Posterior vena cava (tissue), 2 donors: ENCODE measurements at regions of chr14 and their contacts with region 1.

Region 1: DNA sequence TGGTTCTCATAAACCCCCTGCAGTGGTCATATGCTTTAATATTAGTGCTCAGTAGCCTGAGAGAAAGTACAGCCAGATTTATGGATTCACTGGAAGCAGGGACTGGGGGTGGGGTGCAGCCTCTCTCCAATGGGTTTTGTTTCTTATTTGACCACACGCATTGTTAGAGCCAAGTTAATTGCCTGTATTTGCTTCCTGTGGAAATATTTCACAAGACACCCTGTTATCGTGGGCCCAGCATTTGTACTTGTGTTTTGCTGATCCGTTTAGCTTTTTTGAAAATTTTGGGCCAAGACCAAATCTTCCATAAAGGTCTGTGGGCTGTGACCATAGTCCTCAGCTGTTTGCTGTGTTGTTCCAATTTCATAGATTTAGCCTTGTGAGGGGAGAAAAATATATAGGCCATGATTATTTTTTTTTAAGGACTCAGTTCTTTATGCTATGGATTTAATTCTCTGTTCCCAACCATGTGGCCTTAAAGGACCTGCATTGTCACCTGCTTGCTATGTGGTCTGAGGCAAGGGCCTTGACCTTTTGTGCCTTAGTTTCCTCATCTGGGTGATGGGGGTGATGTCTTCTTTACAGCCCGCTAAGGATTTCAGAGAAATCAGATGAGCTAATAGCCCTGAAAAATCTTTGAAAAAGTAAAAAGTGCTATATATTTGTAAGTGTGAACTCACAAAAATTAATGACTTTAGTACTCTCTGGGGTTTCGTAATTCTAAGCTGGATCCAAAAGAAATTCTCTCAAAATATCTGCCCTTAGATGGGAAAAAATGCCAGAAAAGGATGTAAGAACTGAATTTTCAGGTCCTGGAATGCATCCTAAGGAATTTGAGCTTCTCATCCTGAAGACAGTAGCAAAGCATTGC is 370.2 kb downstream of the DPF3 start:
- DNase-seq: no peak

Region 2: DNA sequence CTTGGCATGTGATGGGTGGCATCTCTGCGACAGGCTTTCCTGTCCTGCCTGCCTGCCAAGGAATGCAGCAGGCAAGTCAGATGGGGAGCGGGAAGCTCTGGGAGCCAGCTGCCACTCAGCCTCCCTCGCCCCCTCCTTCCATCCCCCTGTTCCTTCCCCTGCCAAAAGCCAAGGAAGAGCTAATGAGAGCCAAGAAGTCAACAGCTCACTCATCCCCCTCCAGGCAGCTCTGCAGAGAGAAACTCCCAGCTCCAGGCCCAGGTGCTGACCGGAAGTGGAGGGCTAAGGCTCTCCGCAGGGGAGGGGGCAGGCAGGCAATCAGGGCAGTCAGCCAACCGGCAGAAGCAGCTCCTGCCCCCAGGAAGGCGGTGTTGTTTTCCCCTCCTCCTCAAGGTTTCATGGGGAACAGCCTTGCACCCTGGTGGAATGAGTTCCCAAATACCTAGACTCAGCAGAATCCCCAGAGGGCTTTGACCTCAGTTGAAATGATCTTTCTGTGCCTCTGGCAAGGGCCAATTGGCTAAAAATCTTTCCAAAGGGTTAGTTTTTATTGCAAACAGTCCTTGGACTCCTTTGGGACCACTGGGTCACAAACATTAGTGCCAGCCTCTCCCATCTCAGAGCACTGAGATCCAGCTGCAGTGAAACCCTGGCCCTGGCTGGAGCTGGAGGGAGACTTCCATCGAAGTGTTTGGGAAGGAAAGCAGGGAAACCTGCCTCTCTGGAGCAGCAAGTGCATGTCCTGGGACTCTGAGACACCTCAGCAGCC is 21.1 kb after region 1 on chr14:
- intact Hi-C with region 1: loop called in 1 of 2 experiments (anchors 1 kb)
- DNase-seq: no peak

Region 3: GRCh38 chr14:72723858-72724530 is 200.3 kb after region 1 on chr14:
- intact Hi-C with region 1: no loop called
- DNase-seq: no peak